ENCODE measurements at regions of chr1 and their contacts with region 1.

Region 1: DNA sequence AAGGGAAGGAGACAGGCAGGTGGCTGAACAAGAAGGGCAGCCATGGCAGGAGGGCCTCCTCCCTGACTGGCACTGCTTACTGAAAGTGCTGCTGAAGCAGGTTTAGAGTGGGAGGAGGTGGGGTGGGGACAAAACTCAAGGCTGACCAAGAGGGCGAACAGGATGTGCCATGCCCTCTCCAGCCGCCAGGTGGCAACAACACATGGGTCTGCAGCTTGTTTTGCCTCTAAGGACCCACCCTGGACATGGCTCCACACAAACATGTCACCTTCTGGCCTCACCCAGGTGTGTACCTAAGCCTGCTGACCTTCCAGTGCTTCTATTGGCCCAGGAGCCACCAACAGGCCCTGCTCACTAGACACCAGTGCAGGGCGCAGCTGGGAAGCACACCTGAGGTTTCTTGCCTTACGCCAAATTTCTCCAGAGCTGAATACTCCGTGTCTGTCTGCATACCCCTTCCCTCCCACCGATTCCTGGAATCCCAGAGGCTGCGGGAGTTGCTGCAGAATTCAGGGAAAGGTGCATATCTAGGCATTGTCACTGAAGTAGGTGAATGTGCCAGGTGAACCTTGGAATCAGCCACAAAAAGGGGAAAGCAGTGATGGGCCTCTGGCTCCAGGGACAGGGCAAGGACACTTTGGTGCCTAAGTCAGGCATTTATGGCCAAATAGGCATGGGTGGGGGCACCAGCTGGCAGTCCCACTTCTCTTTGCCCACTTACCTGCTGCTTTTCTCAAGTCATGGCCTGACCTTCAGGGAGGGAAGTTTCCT is 5.3 kb downstream of the PSRC1 start:
- DNase-seq: peak; percentile 88
- CTCF ChIP-seq: peak; percentile 91

Region 2: GRCh38 chr1:109248797-109249642 is 28.6 kb before region 1 on chr1 and contains the start of gene CELSR2:
- CTCF ChIA-PET with region 1: interaction called, 14 read pairs
- POLR2A ChIA-PET with region 1: no interaction called
- DNase-seq: peak; percentile 88
- CTCF ChIP-seq: no peak

Region 3: GRCh38 chr1:109290998-109291397 is 13.4 kb after region 1 on chr1:
- CTCF ChIA-PET with region 1: interaction called, 14 read pairs
- POLR2A ChIA-PET with region 1: no interaction called
- DNase-seq: no peak
- CTCF ChIP-seq: no peak

Region 4: GRCh38 chr1:109307274-109308021 is 29.8 kb after region 1 on chr1:
- CTCF ChIA-PET with region 1: interaction called, 24 read pairs
- POLR2A ChIA-PET with region 1: no interaction called
- DNase-seq: no peak
- CTCF ChIP-seq: no peak

Region 5: DNA sequence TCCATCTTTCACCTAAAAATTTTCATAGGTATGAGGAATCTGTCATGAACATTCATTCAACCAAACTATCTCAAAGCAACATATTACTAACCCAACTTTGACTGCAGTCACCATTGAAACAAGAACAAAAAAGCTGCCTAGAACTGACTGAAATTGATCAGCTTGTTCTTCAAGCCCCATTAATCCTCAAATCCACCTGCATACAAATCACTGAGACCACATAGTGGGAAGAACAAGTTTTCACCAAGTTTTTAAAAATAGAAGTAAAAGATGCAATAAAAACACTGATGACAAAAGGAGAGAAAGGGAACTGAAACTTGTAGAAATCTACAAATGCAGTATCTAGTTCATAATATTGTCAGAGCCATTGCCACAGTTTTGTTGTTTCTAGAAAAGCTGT is 114.0 kb after region 1 on chr1:
- CTCF ChIA-PET with region 1: interaction called, 197 read pairs
- POLR2A ChIA-PET with region 1: no interaction called
- DNase-seq: peak; percentile 64
- CTCF ChIP-seq: no peak

Region 6: GRCh38 chr1:109493805-109494539 is 216.4 kb after region 1 on chr1 and contains the start of gene CYB561D1:
- CTCF ChIA-PET with region 1: interaction called, 13 read pairs
- POLR2A ChIA-PET with region 1: no interaction called
- DNase-seq: peak; percentile 94
- CTCF ChIP-seq: peak; percentile 74

Region 7: GRCh38 chr1:109739738-109740660 is 462.4 kb after region 1 on chr1:
- CTCF ChIA-PET with region 1: no interaction called
- POLR2A ChIA-PET with region 1: no interaction called
- DNase-seq: peak; percentile 82
- CTCF ChIP-seq: no peak